Activated CD8-positive, alpha-beta T cell treated with anti-CD3 and anti-CD28 coated beads for 36 hours (primary cell): ENCODE measurements at regions of chr11 and their contacts with region 1.

Region 1: GRCh38 chr11:6362873-6363678 is 27.2 kb upstream of the SMPD1 start:
- DNase-seq: peak; percentile 85
- ATAC-seq: peak; percentile 98
- H3K4me3 Mint-ChIP-seq: no peak overlapping the region
- H3K27ac Mint-ChIP-seq: no peak overlapping the region
- H3K4me1 Mint-ChIP-seq: no peaks in the 10 kb centered on the region
- H3K27me3 Mint-ChIP-seq: no peaks in the 10 kb centered on the region
- CTCF ChIP-seq: peak; percentile 74

Region 2: GRCh38 chr11:6234387-6235107 is 128.5 kb before region 1 on chr11 and contains the start of gene FHIP1B:
- CTCF ChIA-PET with region 1: interaction called, 23 read pairs
- POLR2A ChIA-PET with region 1: no interaction called
- intact Hi-C with region 1: no loop called
- DNase-seq: peak; percentile 100
- ATAC-seq: peak; percentile 94
- H3K4me3 Mint-ChIP-seq: peak within 1 kb of the TSS; percentile 93
- H3K27ac Mint-ChIP-seq: peak within 1 kb of the TSS; percentile 94
- H3K4me1 Mint-ChIP-seq: peaks cover 39% of the 10 kb centered on the region
- H3K27me3 Mint-ChIP-seq: no peaks in the 10 kb centered on the region
- CTCF ChIP-seq: no peak
- total RNA-seq, gene FHIP1B: 14.9 to 15.1 TPM

Region 3: DNA sequence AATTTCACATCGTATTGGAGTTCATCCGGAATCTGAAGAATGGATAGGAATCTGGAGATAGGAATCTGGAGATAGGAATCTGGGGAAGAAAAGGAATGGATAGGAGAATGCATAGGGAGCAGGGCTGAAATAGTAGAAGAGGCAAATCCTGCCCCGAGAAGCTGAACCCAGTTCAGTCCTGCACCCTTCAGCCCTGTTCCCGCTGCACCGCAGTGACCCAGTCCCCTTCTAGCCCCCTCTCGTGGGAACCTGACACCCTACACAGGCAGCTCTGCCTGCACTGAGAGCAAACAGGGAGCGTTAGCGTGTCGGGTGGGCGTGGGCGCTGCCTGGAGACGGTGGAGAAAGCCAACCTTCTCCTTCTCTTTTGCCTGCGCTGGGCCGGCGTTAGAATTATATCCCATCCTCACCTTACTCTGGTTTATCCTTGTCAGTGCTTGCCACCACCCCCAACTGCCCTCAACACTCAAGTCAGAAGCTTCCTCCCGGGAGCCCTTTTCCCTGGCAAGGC is 104.5 kb before region 1 on chr11:
- CTCF ChIA-PET with region 1: interaction called, 70 read pairs
- POLR2A ChIA-PET with region 1: no interaction called
- intact Hi-C with region 1: no loop called
- DNase-seq: peak; percentile 23
- ATAC-seq: peak; percentile 32
- H3K4me3 Mint-ChIP-seq: peak overlapping the region; percentile 34
- H3K27ac Mint-ChIP-seq: no peak overlapping the region
- H3K4me1 Mint-ChIP-seq: no peaks in the 10 kb centered on the region
- H3K27me3 Mint-ChIP-seq: peaks cover 10% of the 10 kb centered on the region
- CTCF ChIP-seq: no peak

Region 4: DNA sequence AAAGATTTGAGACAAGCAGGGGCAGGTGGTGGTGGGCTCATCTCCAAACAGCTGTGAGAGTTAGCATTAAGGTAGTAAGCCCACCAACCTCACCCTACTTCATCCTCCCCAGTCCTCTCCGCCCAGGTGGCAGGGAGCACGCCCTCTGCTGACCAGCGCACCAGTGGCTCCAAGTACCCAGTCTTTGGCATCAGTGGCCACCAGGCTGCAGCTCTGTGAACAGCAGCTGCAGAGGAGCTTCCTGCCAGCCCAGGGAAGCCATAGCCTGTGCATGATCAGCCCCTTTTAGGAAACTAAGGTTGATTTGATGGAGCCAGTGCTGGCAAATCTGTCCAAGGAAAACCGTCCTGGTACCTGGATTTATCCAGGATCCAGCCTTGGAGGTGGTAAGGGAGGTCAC is 64.5 kb before region 1 on chr11:
- CTCF ChIA-PET with region 1: interaction called, 24 read pairs
- POLR2A ChIA-PET with region 1: no interaction called
- intact Hi-C with region 1: no loop called
- DNase-seq: peak; percentile 48
- ATAC-seq: peak; percentile 83
- H3K4me3 Mint-ChIP-seq: no peak overlapping the region
- H3K27ac Mint-ChIP-seq: no peak overlapping the region
- H3K4me1 Mint-ChIP-seq: no peaks in the 10 kb centered on the region
- H3K27me3 Mint-ChIP-seq: peaks cover 7% of the 10 kb centered on the region
- CTCF ChIP-seq: peak; percentile 35

Region 5: DNA sequence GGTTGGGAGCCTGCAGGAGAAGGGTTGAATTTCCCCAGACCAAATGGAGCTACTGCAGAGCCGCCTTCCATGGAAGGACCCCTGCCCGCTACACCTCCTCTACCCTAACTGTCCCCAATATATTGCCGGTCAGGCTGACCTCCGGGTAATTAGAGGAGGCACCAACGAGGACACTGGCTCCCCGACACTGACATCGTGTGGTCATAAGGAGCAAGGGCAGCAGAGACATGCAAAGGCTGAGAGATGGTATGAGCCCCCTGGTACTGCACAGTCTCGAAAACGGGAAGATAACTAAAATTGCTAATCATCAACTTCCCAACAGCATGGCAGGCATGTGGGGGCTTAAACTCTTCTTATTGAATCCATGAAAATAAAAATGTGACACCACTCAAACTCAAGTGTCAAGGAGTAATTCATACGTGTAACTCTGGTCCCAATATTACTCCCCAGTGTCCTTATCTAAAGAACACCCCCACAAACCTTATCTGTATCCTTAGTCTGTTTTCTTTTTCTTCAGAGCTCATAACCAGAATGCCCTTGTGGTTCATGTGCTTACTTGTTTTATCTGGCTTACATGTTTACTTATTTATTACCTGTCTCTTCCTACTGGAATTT is 47.2 kb before region 1 on chr11:
- CTCF ChIA-PET with region 1: interaction called, 20 read pairs
- POLR2A ChIA-PET with region 1: no interaction called
- intact Hi-C with region 1: no loop called
- DNase-seq: peak; percentile 57
- ATAC-seq: peak; percentile 43
- H3K4me3 Mint-ChIP-seq: no peak overlapping the region
- H3K27ac Mint-ChIP-seq: no peak overlapping the region
- H3K4me1 Mint-ChIP-seq: peaks cover 20% of the 10 kb centered on the region
- H3K27me3 Mint-ChIP-seq: peaks cover 40% of the 10 kb centered on the region
- CTCF ChIP-seq: peak; percentile 76

Region 6: GRCh38 chr11:6431861-6432260 is 68.8 kb after region 1 on chr11:
- CTCF ChIA-PET with region 1: interaction called, 11 read pairs
- POLR2A ChIA-PET with region 1: no interaction called
- intact Hi-C with region 1: no loop called
- DNase-seq: no peak
- ATAC-seq: no peak
- H3K4me3 Mint-ChIP-seq: no peak overlapping the region
- H3K27ac Mint-ChIP-seq: no peak overlapping the region
- H3K4me1 Mint-ChIP-seq: peaks cover 3% of the 10 kb centered on the region
- H3K27me3 Mint-ChIP-seq: no peaks in the 10 kb centered on the region
- CTCF ChIP-seq: no peak